ENCODE measurements at regions of chr20 and their contacts with region 1.

Region 1: DNA sequence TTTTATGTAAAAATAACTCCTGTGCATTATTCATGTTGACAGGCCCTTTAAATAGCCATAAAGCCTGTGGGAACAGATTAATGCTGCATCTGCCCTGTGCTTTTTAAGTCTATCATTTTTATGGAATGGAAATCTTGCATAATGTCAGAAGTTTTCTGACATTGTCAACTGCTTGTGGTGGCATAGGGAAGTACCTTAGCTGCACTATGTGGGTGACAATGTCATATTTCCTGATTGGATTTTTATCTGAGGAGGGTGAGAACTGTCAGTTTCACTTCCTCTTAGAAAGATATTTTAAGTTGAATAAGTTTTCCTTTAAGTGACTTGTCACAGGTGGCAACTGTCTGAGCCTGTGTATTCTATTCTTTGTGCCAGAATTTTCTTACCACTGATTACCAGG is 267.9 kb downstream of the PLCB1 start:
- H3K4me3 Mint-ChIP-seq: no peak overlapping the region
- H3K27ac Mint-ChIP-seq: no peak overlapping the region
- H3K4me1 Mint-ChIP-seq: peaks cover 29% of the 10 kb centered on the region
- H3K27me3 Mint-ChIP-seq: no peaks in the 10 kb centered on the region

Region 2: DNA sequence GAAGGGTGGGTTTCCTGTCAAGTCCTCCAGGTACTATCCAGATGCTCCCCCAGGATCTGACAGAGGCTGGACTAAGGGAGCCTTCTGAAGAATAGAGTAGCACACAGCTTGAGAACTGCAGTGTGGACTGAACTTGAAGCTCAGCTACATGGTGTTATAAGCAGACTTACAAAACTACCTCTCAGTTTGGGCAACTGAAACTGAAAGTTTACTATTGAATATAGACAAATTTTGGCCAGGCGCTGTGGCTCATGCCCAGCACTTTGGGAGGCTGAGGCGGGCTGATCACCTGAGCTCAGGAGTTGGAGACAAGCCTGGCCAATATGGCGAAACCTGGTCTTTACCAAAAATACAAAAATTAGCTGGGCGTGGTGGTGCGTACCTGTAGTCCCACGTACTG is 80.7 kb after region 1 on chr20:
- intact Hi-C with region 1: no loop called
- H3K4me3 Mint-ChIP-seq: no peak overlapping the region
- H3K27ac Mint-ChIP-seq: no peak overlapping the region
- H3K4me1 Mint-ChIP-seq: peaks cover 14% of the 10 kb centered on the region
- H3K27me3 Mint-ChIP-seq: no peaks in the 10 kb centered on the region

Region 3: GRCh38 chr20:8527998-8528723 is 128.2 kb after region 1 on chr20:
- intact Hi-C with region 1: loop called (anchors 5 kb)
- H3K4me3 Mint-ChIP-seq: no peak overlapping the region
- H3K27ac Mint-ChIP-seq: no peak overlapping the region
- H3K4me1 Mint-ChIP-seq: peaks cover 11% of the 10 kb centered on the region
- H3K27me3 Mint-ChIP-seq: no peaks in the 10 kb centered on the region